Panc1 (cell line): ENCODE measurements at regions of chr1 and their contacts with region 1.

Region 1: DNA sequence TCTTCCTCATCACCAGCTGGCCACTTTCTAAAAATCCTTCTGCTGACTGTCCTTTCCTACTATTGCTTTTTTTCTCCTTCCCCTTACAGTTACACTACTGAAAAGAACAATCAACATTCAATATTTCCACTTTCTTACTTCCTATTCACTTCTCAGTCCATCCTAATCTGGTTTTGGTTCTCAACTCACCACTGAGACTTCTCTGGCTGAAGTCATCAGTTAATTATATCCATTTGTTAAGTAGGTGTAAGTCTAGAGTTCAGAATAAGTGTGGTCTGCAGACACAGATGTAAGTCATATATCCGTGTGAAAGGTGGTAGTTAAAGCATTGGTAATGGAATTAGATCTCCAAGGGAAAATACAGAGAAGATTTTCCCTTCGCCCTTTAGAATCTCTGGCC is 21.4 kb downstream of the PEA15 start:
- DNase-seq: no peak
- ATAC-seq: no peak
- H3K4me3 ChIP-seq: no peak overlapping the region
- H3K27ac ChIP-seq: no peak overlapping the region
- H3K4me1 ChIP-seq: no peaks in the 10 kb centered on the region
- H3K27me3 ChIP-seq: no peaks in the 10 kb centered on the region
- CTCF ChIP-seq: no peak

Region 2: DNA sequence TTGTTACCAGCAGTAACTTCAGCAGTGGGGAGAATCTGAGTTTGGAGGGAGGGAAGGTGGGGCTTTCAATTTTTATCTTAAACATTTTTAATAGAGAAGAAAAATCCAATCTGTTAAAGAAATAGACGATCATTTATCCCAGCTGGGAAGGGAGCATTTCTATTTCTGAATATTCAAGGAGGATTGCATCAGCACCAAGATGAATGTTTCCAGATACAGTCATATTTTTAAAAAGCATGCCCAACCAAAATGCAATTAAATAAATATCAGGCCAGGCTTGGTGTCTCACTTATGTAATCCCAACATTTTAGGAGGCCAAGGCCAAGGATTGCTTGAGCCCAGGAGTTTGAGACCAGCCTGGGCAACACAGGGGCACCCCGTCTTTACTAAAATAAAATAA is 76.9 kb before region 1 on chr1:
- CTCF ChIA-PET with region 1: no interaction called
- POLR2A ChIA-PET with region 1: no interaction called
- in situ Hi-C with region 1: no loop called
- intact Hi-C with region 1: no loop called
- DNase-seq: no peak
- ATAC-seq: no peak
- H3K4me3 ChIP-seq: no peak overlapping the region
- H3K27ac ChIP-seq: no peak overlapping the region
- H3K4me1 ChIP-seq: no peaks in the 10 kb centered on the region
- H3K27me3 ChIP-seq: peaks cover 2% of the 10 kb centered on the region; the same call in 1 of the 2 replicates
- CTCF ChIP-seq: no peak

Region 3: DNA sequence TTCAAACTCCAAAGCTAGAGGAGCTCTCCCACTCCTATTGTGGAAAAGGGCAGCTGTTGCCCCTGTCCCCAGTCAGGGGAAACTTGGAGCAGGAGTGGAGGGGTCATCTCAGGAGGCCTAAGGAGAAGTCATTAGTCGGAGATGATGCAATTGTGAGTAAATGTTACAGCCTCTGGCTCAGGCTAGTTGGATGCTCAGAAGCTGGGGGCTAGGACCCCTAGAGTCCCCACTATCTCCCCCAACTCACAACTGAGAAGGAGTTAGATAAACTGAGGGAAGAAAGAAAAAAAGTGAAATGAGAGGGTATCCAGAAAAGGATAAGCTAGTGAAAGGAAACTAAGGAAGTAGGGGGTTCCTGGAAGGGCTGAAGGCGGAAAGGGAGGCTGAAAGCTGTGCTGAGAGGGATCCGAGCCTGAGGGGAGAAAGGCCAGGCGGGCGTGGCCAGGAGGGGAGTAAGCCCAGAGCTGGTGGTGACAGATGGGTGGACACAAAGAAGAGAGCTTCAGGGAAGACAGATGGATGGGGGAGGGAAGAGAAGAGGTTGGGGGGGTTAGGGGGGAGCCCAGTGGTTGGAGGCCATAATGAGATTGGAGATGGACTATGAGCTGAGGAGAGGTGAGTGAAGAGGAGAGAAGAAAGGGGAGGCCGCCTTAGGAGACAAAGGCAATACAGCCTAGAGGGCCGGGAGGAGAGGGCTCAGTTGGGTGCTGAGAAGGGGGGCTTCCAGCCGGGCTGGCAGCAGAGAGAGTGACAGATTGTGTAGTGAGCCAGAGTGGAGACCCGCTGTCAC is 135.7 kb after region 1 on chr1:
- CTCF ChIA-PET with region 1: no interaction called
- POLR2A ChIA-PET with region 1: no interaction called
- in situ Hi-C with region 1: no loop called
- intact Hi-C with region 1: no loop called
- DNase-seq: no peak
- ATAC-seq: no peak
- H3K4me3 ChIP-seq: no peak overlapping the region
- H3K27ac ChIP-seq: peak overlapping the region; percentile 34; the same call in 1 of the 2 replicates
- H3K4me1 ChIP-seq: no peaks in the 10 kb centered on the region
- H3K27me3 ChIP-seq: no peaks in the 10 kb centered on the region
- CTCF ChIP-seq: no peak

Region 4: GRCh38 chr1:160607011-160607671 is 380.5 kb after region 1 on chr1:
- CTCF ChIA-PET with region 1: no interaction called
- POLR2A ChIA-PET with region 1: no interaction called
- in situ Hi-C with region 1: no loop called
- intact Hi-C with region 1: no loop called
- DNase-seq: peak; percentile 35
- ATAC-seq: peak; percentile 92
- H3K4me3 ChIP-seq: no peak overlapping the region
- H3K27ac ChIP-seq: no peak overlapping the region
- H3K4me1 ChIP-seq: no peaks in the 10 kb centered on the region
- H3K27me3 ChIP-seq: no peaks in the 10 kb centered on the region
- CTCF ChIP-seq: peak; percentile 75

Region 5: GRCh38 chr1:162193815-162194214 is 1967.2 kb after region 1 on chr1:
- CTCF ChIA-PET with region 1: no interaction called
- POLR2A ChIA-PET with region 1: no interaction called
- in situ Hi-C with region 1: no loop called
- intact Hi-C with region 1: loop called (anchors 10 kb)
- DNase-seq: no peak
- ATAC-seq: peak; percentile 61
- H3K4me3 ChIP-seq: no peak overlapping the region
- H3K27ac ChIP-seq: peak overlapping the region; percentile 84
- H3K4me1 ChIP-seq: peaks cover 89% of the 10 kb centered on the region
- H3K27me3 ChIP-seq: no peaks in the 10 kb centered on the region
- CTCF ChIP-seq: no peak